Mammary epithelial cell (primary cell): ENCODE measurements at regions of chr11 and their contacts with region 1.

Region 1: DNA sequence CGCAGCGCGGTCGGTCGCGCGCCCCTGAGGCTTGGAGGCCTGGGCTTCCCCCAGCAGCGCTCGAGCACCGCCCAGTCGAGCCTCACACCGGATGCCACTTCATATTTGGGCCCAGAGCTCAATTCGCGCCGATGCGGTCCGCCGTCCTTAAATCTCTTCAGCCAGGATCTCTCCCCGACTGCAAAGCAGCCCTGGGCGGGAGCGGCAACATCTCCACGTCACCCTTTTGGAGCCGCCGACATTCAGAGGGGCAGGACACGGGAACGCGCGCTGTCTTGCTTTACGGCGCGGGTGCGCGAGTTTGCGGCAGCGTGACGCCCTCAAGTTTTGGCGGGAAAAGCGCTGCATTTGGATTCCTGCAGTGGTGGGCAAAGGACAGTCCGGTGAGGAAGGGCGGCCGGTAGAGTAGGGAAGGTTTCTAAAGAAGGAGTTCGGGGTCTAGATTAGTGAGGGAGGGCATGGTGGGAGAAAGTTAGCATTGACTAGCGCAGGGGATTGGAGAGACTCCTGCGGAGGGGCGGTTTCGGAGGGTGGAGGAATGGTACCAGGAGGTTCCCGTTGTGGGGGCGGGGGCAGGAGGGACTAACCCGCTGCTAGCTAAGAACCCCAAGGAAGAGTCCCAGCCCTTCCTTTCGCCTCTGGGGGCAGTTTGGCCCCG is 796 bp downstream of the CHEK1 start:
- DNase-seq: peak; percentile 94
- H3K4me3 ChIP-seq: peak overlapping the region; percentile 71 to 93 (median 72)
- H3K27ac ChIP-seq: peak overlapping the region; percentile 86
- H3K4me1 ChIP-seq: peaks cover 14% of the 10 kb centered on the region
- H3K27me3 ChIP-seq: no peaks in the 10 kb centered on the region
- CTCF ChIP-seq: no peak

Region 2: GRCh38 chr11:125568970-125569914 is 56.5 kb before region 1 on chr11 and contains the start of gene EI24:
- CTCF ChIA-PET with region 1: no interaction called
- dilution Hi-C with region 1: loop called (anchors 10 kb)
- in situ Hi-C with region 1: no loop called
- intact Hi-C with region 1: no loop called
- DNase-seq: peak; percentile 90
- H3K4me3 ChIP-seq: peak within 1 kb of the TSS; percentile 57 to 82 (median 77)
- H3K27ac ChIP-seq: peak within 1 kb of the TSS; percentile 78
- H3K4me1 ChIP-seq: peaks cover 9% of the 10 kb centered on the region
- H3K27me3 ChIP-seq: no peaks in the 10 kb centered on the region
- CTCF ChIP-seq: peak; percentile 40 to 78
- total RNA-seq, gene EI24: 127 to 162 TPM

Region 3: DNA sequence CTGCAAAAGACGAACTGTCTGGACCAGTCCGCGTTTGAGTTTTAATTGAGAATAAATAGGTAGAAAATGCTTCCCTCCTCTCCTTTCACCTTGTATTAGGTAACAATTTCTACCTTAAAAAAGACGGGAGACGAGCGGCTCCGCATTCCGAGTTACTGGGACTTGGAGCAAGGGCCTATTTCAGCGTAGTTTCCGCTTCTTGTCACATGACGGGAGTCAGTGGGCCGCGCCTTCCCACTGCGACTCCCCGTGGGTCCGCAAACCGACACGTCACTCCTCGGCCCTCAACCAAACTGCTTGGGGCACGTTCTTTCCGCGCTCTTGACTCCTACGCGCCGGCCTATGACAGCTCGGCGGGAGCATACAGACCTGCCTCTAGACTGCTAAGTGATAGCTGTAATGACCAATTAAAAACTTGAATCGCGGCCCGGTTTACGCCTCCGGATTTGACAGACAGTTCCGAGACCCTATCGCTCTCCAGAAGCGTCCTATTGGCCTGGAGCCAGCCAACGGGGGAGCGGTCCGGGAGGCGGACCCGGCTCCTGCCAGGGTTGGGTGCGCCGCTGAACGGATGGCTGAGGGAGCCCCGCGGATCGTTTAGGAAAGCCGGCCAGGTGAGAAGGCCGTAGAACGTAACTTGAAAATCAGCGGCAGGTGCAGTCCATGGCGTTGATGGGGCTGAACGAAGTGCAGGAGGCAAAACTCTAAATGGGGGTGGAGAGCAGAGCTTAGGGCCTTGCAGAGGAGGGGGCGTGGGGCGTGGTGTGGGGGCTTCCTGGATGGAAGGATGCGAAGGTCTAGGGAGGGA is 33.2 kb before region 1 on chr11 and contains the start of gene STT3A:
- CTCF ChIA-PET with region 1: no interaction called
- dilution Hi-C with region 1: no loop called
- in situ Hi-C with region 1: no loop called
- intact Hi-C with region 1: loop called (anchors 1 kb)
- DNase-seq: peak; percentile 100
- H3K4me3 ChIP-seq: peak within 1 kb of the TSS; percentile 86 to 96 (median 91)
- H3K27ac ChIP-seq: peak within 1 kb of the TSS; percentile 89
- H3K4me1 ChIP-seq: peaks cover 11% of the 10 kb centered on the region
- H3K27me3 ChIP-seq: no peaks in the 10 kb centered on the region
- CTCF ChIP-seq: no peak
- total RNA-seq, gene STT3A: 172 to 179 TPM

Region 4: GRCh38 chr11:125874556-125875124 is 248.9 kb after region 1 on chr11:
- CTCF ChIA-PET with region 1: no interaction called
- dilution Hi-C with region 1: no loop called
- in situ Hi-C with region 1: loop called in 1 of 2 experiments (anchors 10 kb)
- intact Hi-C with region 1: loop called (anchors 1 kb)
- DNase-seq: peak; percentile 44
- H3K4me3 ChIP-seq: no peak overlapping the region
- H3K27ac ChIP-seq: no peak overlapping the region
- H3K4me1 ChIP-seq: no peaks in the 10 kb centered on the region
- H3K27me3 ChIP-seq: no peaks in the 10 kb centered on the region
- CTCF ChIP-seq: peak; percentile 83 to 85

Region 5: GRCh38 chr11:125887373-125888324 is 261.9 kb after region 1 on chr11 and contains the start of gene HYLS1:
- CTCF ChIA-PET with region 1: no interaction called
- dilution Hi-C with region 1: no loop called
- in situ Hi-C with region 1: no loop called
- intact Hi-C with region 1: loop called (anchors 5 kb)
- DNase-seq: peak; percentile 97
- H3K4me3 ChIP-seq: peak within 1 kb of the TSS; percentile 80 to 90 (median 89)
- H3K27ac ChIP-seq: peak within 1 kb of the TSS; percentile 62
- H3K4me1 ChIP-seq: peaks cover 16% of the 10 kb centered on the region
- H3K27me3 ChIP-seq: no peaks in the 10 kb centered on the region
- CTCF ChIP-seq: peak in 1 of 2 donors; percentile 30
- total RNA-seq, gene HYLS1: 2.5 to 8.8 TPM

Region 6: GRCh38 chr11:126211235-126212088 is 585.7 kb after region 1 on chr11 and contains the starts of genes FAM118B and RPUSD4:
- CTCF ChIA-PET with region 1: no interaction called
- dilution Hi-C with region 1: no loop called
- in situ Hi-C with region 1: no loop called
- intact Hi-C with region 1: loop called (anchors 10 kb)
- DNase-seq: peak; percentile 95
- H3K4me3 ChIP-seq: peak within 1 kb of the TSS; percentile 87 to 100 (median 99)
- H3K27ac ChIP-seq: peak within 1 kb of the TSS; percentile 79
- H3K4me1 ChIP-seq: peaks cover 10% of the 10 kb centered on the region
- H3K27me3 ChIP-seq: no peaks in the 10 kb centered on the region
- CTCF ChIP-seq: no peak
- total RNA-seq, gene FAM118B: 16.0 to 27.7 TPM
- total RNA-seq, gene RPUSD4: 20.5 to 26.6 TPM